CD8-positive, alpha-beta T cell (primary cell): ENCODE measurements at regions of chr19 and their contacts with region 1.

Region 1: GRCh38 chr19:7098701-7099596 is 29.4 kb downstream of the ZNF557 start:
- DNase-seq: peak; percentile 79 to 94 (median 88)
- ATAC-seq: peak; percentile 94
- H3K4me3 ChIP-seq: peak overlapping the region; percentile 90
- H3K4me3 Mint-ChIP-seq: peak overlapping the region; percentile 92
- H3K27ac ChIP-seq: peak overlapping the region; percentile 68 to 93
- H3K27ac Mint-ChIP-seq: peak overlapping the region; percentile 95
- H3K4me1 ChIP-seq: peaks cover 14% of the 10 kb centered on the region
- H3K4me1 Mint-ChIP-seq: peaks cover 30% of the 10 kb centered on the region
- H3K27me3 ChIP-seq: no peaks in the 10 kb centered on the region
- H3K27me3 Mint-ChIP-seq: no peaks in the 10 kb centered on the region
- CTCF ChIP-seq: no peak

Region 2: GRCh38 chr19:7069042-7069903 is 29.7 kb before region 1 on chr19 and contains the start of gene ZNF557:
- CTCF ChIA-PET with region 1: interaction called, 7 read pairs
- POLR2A ChIA-PET with region 1: interaction called, 15 read pairs
- intact Hi-C with region 1: loop called (anchors 1 kb)
- DNase-seq: peak; percentile 98 to 99 (median 99)
- ATAC-seq: peak; percentile 97
- H3K4me3 ChIP-seq: peak within 1 kb of the TSS; percentile 76 to 99
- H3K4me3 Mint-ChIP-seq: peak within 1 kb of the TSS; percentile 94
- H3K27ac ChIP-seq: peak within 1 kb of the TSS; percentile 81 to 95
- H3K27ac Mint-ChIP-seq: peak within 1 kb of the TSS; percentile 96
- H3K4me1 ChIP-seq: peaks cover 21% of the 10 kb centered on the region
- H3K4me1 Mint-ChIP-seq: peaks cover 25% of the 10 kb centered on the region
- H3K27me3 ChIP-seq: no peaks in the 10 kb centered on the region
- H3K27me3 Mint-ChIP-seq: no peaks in the 10 kb centered on the region
- CTCF ChIP-seq: no peak
- total RNA-seq, gene ZNF557: 19.7 to 20.0 TPM

Region 3: GRCh38 chr19:7152568-7152967 is 53.6 kb after region 1 on chr19:
- CTCF ChIA-PET with region 1: interaction called, 4 read pairs
- POLR2A ChIA-PET with region 1: no interaction called
- intact Hi-C with region 1: loop called (anchors 2 kb)
- DNase-seq: no peak
- ATAC-seq: no peak
- H3K4me3 ChIP-seq: no peak overlapping the region
- H3K4me3 Mint-ChIP-seq: no peak overlapping the region
- H3K27ac ChIP-seq: no peak overlapping the region
- H3K27ac Mint-ChIP-seq: no peak overlapping the region
- H3K4me1 ChIP-seq: no peaks in the 10 kb centered on the region
- H3K4me1 Mint-ChIP-seq: peaks cover 3% of the 10 kb centered on the region
- H3K27me3 ChIP-seq: peaks cover 0 to 3% of the 10 kb centered on the region in 2 experiments
- H3K27me3 Mint-ChIP-seq: no peaks in the 10 kb centered on the region
- CTCF ChIP-seq: no peak

Region 4: GRCh38 chr19:7340959-7341837 is 242.2 kb after region 1 on chr19:
- CTCF ChIA-PET with region 1: interaction called, 6 read pairs
- POLR2A ChIA-PET with region 1: interaction called, 3 read pairs
- intact Hi-C with region 1: loop called (anchors 1 kb)
- DNase-seq: peak; percentile 77 to 96 (median 84)
- ATAC-seq: peak; percentile 27
- H3K4me3 ChIP-seq: no peak overlapping the region
- H3K4me3 Mint-ChIP-seq: no peak overlapping the region
- H3K27ac ChIP-seq: no peak overlapping the region
- H3K27ac Mint-ChIP-seq: peak overlapping the region; percentile 85
- H3K4me1 ChIP-seq: peaks cover 49% of the 10 kb centered on the region
- H3K4me1 Mint-ChIP-seq: peaks cover 52% of the 10 kb centered on the region
- H3K27me3 ChIP-seq: no peaks in the 10 kb centered on the region
- H3K27me3 Mint-ChIP-seq: no peaks in the 10 kb centered on the region
- CTCF ChIP-seq: peak; percentile 93

Region 5: GRCh38 chr19:7382694-7383093 is 283.7 kb after region 1 on chr19:
- CTCF ChIA-PET with region 1: interaction called, 8 read pairs
- POLR2A ChIA-PET with region 1: interaction called, 3 read pairs
- intact Hi-C with region 1: loop called in 1 of 2 experiments (anchors 1 kb)
- DNase-seq: no peak
- ATAC-seq: no peak
- H3K4me3 ChIP-seq: no peak overlapping the region
- H3K4me3 Mint-ChIP-seq: no peak overlapping the region
- H3K27ac ChIP-seq: no peak overlapping the region
- H3K27ac Mint-ChIP-seq: no peak overlapping the region
- H3K4me1 ChIP-seq: no peaks in the 10 kb centered on the region
- H3K4me1 Mint-ChIP-seq: peaks cover 19% of the 10 kb centered on the region
- H3K27me3 ChIP-seq: no peaks in the 10 kb centered on the region
- H3K27me3 Mint-ChIP-seq: no peaks in the 10 kb centered on the region
- CTCF ChIP-seq: no peak

Region 6: GRCh38 chr19:7394731-7395359 is 295.9 kb after region 1 on chr19:
- CTCF ChIA-PET with region 1: interaction called, 4 read pairs
- POLR2A ChIA-PET with region 1: no interaction called
- intact Hi-C with region 1: loop called in 1 of 2 experiments (anchors 5 kb)
- DNase-seq: peak; percentile 79 to 97 (median 89)
- ATAC-seq: peak; percentile 90
- H3K4me3 ChIP-seq: peak overlapping the region; percentile 39 to 65
- H3K4me3 Mint-ChIP-seq: peak overlapping the region; percentile 86
- H3K27ac ChIP-seq: peak overlapping the region; percentile 12 to 72
- H3K27ac Mint-ChIP-seq: peak overlapping the region; percentile 87
- H3K4me1 ChIP-seq: peaks cover 26% of the 10 kb centered on the region
- H3K4me1 Mint-ChIP-seq: peaks cover 41% of the 10 kb centered on the region
- H3K27me3 ChIP-seq: no peaks in the 10 kb centered on the region
- H3K27me3 Mint-ChIP-seq: no peaks in the 10 kb centered on the region
- CTCF ChIP-seq: no peak

Region 7: DNA sequence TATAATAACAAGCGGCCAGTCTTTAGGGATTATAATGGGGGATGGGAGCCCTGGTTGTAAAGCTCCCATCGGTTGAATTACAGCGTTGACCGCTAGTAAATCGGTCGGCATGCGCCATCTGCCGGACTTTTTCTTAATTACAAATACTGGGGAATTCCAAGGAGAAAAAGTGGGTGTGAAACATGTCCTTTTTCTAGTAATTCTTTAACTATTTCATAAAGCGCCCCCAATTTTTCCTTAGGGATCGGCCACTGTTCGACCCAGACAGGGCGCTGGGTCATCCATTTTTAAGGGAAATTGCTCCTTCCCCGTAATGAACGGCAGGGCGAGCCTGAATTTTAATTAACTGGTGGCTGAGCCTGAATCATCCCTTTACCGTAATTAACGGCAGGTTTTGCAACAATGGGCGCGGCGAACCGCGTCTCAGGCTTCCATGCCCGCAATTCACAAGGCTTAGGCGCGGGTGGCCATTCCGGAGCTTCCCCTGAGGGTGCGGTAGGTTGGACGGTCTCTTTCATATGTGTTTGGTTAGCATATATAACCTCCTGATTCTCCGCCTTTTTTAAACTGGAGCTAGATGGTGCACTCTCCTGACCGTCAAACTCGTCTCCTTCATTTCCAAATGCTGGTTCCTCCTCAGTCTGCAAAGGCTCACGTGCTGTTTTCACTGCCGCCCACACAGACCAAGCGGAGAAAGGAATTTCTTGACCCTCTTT is 700.8 kb after region 1 on chr19:
- CTCF ChIA-PET with region 1: interaction called, 19 read pairs
- POLR2A ChIA-PET with region 1: no interaction called
- intact Hi-C with region 1: loop called in 1 of 2 experiments (anchors 1 kb)
- DNase-seq: peak in 8 of 9 experiments; percentile 15 to 77 (median 66)
- ATAC-seq: no peak
- H3K4me3 ChIP-seq: no peak overlapping the region
- H3K4me3 Mint-ChIP-seq: no peak overlapping the region
- H3K27ac ChIP-seq: no peak overlapping the region
- H3K27ac Mint-ChIP-seq: no peak overlapping the region
- H3K4me1 ChIP-seq: no peaks in the 10 kb centered on the region
- H3K4me1 Mint-ChIP-seq: peaks cover 4% of the 10 kb centered on the region
- H3K27me3 ChIP-seq: peaks cover 0 to 4% of the 10 kb centered on the region in 2 experiments
- H3K27me3 Mint-ChIP-seq: peaks cover 11% of the 10 kb centered on the region
- CTCF ChIP-seq: peak; percentile 69